CD8-positive, alpha-beta T cell (primary cell): ENCODE measurements at regions of chr3 and their contacts with region 1.

Region 1: GRCh38 chr3:128969993-128970739 is 23.7 kb downstream of the CFAP92 start:
- DNase-seq: peak; percentile 30 to 80 (median 68)
- ATAC-seq: peak; percentile 89
- H3K4me3 ChIP-seq: no peak overlapping the region
- H3K4me3 Mint-ChIP-seq: no peak overlapping the region
- H3K27ac ChIP-seq: no peak overlapping the region
- H3K27ac Mint-ChIP-seq: no peak overlapping the region
- H3K4me1 ChIP-seq: peaks cover 6% of the 10 kb centered on the region
- H3K4me1 Mint-ChIP-seq: peaks cover 7% of the 10 kb centered on the region
- H3K27me3 ChIP-seq: peaks cover 0 to 2% of the 10 kb centered on the region in 2 experiments
- H3K27me3 Mint-ChIP-seq: no peaks in the 10 kb centered on the region
- CTCF ChIP-seq: peak; percentile 96

Region 2: GRCh38 chr3:128456776-128457715 is 513.1 kb before region 1 on chr3:
- CTCF ChIA-PET with region 1: no interaction called
- POLR2A ChIA-PET with region 1: no interaction called
- intact Hi-C with region 1: no loop called
- DNase-seq: no peak
- ATAC-seq: no peak
- H3K4me3 ChIP-seq: no peak overlapping the region
- H3K4me3 Mint-ChIP-seq: no peak overlapping the region
- H3K27ac ChIP-seq: no peak overlapping the region
- H3K27ac Mint-ChIP-seq: no peak overlapping the region
- H3K4me1 ChIP-seq: no peaks in the 10 kb centered on the region
- H3K4me1 Mint-ChIP-seq: no peaks in the 10 kb centered on the region
- H3K27me3 ChIP-seq: peaks cover 0 to 6% of the 10 kb centered on the region in 2 experiments
- H3K27me3 Mint-ChIP-seq: peaks cover 18% of the 10 kb centered on the region
- CTCF ChIP-seq: no peak

Region 3: DNA sequence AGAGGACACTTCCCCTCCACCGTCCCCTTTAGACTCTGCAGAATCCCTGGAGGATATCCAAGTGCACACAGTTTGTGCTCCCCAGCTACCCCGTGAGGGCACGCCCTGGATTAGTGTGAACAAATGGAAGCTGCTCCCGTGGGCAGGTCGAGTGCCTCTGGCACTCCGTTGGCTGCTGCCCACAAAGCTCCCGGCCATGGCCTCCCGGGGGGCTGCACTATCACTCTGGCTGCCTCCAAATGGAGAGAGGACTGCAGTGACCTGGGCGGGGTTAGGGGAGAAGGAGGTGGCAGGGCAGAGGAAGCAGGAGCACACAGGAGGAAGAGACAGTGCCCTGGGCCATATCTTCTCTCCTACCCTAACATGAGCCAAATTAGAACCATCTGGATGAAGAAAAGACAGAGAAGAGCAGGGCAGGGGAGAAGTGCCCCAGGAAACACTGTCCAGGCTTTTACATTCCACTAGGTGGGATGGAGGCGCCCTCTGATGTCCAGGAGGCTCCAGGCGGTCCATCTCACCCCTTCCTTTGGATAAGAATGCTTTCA is 120.2 kb before region 1 on chr3:
- CTCF ChIA-PET with region 1: no interaction called
- POLR2A ChIA-PET with region 1: no interaction called
- intact Hi-C with region 1: no loop called
- DNase-seq: no peak
- ATAC-seq: no peak
- H3K4me3 ChIP-seq: no peak overlapping the region
- H3K4me3 Mint-ChIP-seq: no peak overlapping the region
- H3K27ac ChIP-seq: no peak overlapping the region
- H3K27ac Mint-ChIP-seq: no peak overlapping the region
- H3K4me1 ChIP-seq: peaks cover 19% of the 10 kb centered on the region
- H3K4me1 Mint-ChIP-seq: peaks cover 9% of the 10 kb centered on the region
- H3K27me3 ChIP-seq: no peaks in the 10 kb centered on the region
- H3K27me3 Mint-ChIP-seq: no peaks in the 10 kb centered on the region
- CTCF ChIP-seq: no peak

Region 4: DNA sequence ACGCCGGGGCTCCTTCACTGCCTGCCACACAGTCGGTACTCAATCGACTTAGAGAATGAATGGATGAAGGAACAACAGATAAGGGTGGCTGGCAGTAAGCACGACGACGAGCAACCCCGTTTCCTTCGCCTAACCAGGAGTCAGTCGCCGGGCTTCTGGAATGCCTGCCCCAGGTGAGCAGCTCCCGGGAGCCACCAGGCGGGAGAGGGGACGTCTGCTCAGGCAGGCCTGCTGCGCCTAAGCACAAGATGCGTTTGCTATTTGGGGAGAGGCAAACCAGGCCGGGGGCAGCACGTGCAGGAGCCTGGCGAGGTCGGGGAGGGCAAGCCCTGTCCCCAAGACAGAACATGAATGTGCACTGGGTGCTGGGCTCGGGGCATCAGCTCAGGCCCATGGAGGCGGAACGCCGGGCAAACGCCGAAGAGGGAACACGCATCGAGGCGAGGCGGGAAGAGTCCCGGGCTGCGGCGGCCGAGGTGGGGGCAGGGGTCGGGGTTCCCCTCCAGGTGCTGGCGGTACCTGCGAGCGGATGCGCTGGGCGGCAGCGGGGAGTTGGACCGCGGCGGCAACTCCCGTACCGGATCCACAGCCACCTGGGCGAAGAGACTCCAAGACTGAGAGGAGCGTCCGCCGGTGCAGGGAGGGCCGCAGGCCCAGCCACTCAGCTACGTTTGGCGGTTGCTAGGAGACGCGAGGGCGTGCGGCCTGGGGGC is 23.5 kb after region 1 on chr3 and contains the start of gene CFAP92:
- CTCF ChIA-PET with region 1: interaction called, 30 read pairs
- POLR2A ChIA-PET with region 1: interaction called, 3 read pairs
- intact Hi-C with region 1: no loop called
- DNase-seq: peak; percentile 84 to 94 (median 92)
- ATAC-seq: peak; percentile 97
- H3K4me3 ChIP-seq: peak within 1 kb of the TSS; percentile 39
- H3K4me3 Mint-ChIP-seq: peak within 1 kb of the TSS; percentile 81
- H3K27ac ChIP-seq: peak within 1 kb of the TSS in 1 of 2 experiments; percentile 22
- H3K27ac Mint-ChIP-seq: peak within 1 kb of the TSS; percentile 39
- H3K4me1 ChIP-seq: peaks cover 31% of the 10 kb centered on the region
- H3K4me1 Mint-ChIP-seq: peaks cover 30% of the 10 kb centered on the region
- H3K27me3 ChIP-seq: no peaks in the 10 kb centered on the region
- H3K27me3 Mint-ChIP-seq: no peaks in the 10 kb centered on the region
- CTCF ChIP-seq: no peak
- total RNA-seq, gene CFAP92: 0.60 to 0.75 TPM

Region 5: GRCh38 chr3:129026728-129027543 is 56.8 kb after region 1 on chr3:
- CTCF ChIA-PET with region 1: interaction called, 29 read pairs
- POLR2A ChIA-PET with region 1: interaction called, 3 read pairs
- intact Hi-C with region 1: loop called in 1 of 2 experiments (anchors 1 kb)
- DNase-seq: peak; percentile 85 to 98 (median 91)
- ATAC-seq: peak; percentile 98
- H3K4me3 ChIP-seq: peak overlapping the region; percentile 58 to 61
- H3K4me3 Mint-ChIP-seq: peak overlapping the region; percentile 85
- H3K27ac ChIP-seq: peak overlapping the region; percentile 75 to 80
- H3K27ac Mint-ChIP-seq: peak overlapping the region; percentile 99
- H3K4me1 ChIP-seq: peaks cover 22% of the 10 kb centered on the region
- H3K4me1 Mint-ChIP-seq: peaks cover 26% of the 10 kb centered on the region
- H3K27me3 ChIP-seq: no peaks in the 10 kb centered on the region
- H3K27me3 Mint-ChIP-seq: no peaks in the 10 kb centered on the region
- CTCF ChIP-seq: peak; percentile 84

Region 6: DNA sequence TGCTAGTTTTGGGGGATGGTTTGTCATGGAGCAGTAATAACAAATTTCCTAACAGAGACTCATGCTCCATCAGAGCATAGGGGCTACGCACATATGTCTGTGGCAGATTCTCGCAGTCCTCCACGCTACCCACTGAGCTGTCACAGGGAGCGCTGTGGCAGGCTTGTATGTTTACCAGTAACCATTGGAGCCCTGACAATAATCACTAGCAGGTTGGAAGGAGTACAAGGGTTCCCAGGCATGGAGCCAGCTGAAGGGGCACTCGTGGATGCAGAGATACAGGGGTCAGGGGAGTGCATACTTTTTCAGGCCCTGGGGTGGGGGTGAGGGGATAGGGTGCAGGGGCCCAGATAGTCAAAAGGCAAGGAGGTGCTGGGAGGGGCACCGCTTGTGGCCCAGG is 82.5 kb after region 1 on chr3:
- CTCF ChIA-PET with region 1: interaction called, 79 read pairs
- POLR2A ChIA-PET with region 1: no interaction called
- intact Hi-C with region 1: loop called in 1 of 2 experiments (anchors 1 kb)
- DNase-seq: no peak
- ATAC-seq: no peak
- H3K4me3 ChIP-seq: no peak overlapping the region
- H3K4me3 Mint-ChIP-seq: no peak overlapping the region
- H3K27ac ChIP-seq: no peak overlapping the region
- H3K27ac Mint-ChIP-seq: no peak overlapping the region
- H3K4me1 ChIP-seq: peaks cover 4% of the 10 kb centered on the region
- H3K4me1 Mint-ChIP-seq: peaks cover 10% of the 10 kb centered on the region
- H3K27me3 ChIP-seq: no peaks in the 10 kb centered on the region
- H3K27me3 Mint-ChIP-seq: no peaks in the 10 kb centered on the region
- CTCF ChIP-seq: no peak

Region 7: DNA sequence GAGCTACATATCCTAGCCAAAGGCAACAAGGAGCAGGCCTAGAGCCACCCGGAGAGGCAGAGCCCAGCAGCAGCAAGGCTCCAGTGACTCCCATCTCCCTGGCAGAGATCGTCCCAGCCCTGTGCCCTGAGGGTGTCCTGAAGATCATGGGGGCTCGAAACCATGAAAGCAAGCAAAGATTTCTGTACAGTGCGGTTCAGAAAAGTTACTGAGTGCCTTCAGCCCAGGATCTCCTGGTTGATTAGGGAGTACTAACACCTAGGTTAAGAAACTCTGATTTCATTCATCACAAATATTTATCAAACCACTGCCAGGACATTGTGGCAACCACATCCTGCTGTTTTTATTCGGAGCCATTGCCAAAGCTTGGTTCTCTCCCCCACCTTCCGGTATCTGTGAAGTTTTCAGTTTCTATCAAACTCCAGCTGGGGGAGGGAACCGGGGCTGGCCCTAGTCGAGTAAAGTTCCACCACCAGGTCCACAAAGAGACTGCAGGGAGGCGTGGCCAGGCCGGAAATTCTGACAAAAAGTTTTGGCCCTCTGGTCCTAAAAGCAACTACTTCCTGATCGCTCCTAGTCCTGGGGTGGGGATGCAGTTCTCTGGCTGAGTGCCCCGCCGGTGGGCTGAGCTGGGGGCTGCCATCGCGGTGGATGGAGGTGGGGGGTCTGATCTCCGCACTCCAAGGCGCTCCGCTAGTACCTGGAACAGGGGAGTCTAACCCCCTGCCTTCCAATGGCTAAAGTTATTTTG is 150.3 kb after region 1 on chr3:
- CTCF ChIA-PET with region 1: interaction called, 6 read pairs
- POLR2A ChIA-PET with region 1: interaction called, 9 read pairs
- intact Hi-C with region 1: loop called in 1 of 2 experiments (anchors 10 kb)
- DNase-seq: peak; percentile 79 to 97 (median 92)
- ATAC-seq: peak; percentile 51
- H3K4me3 ChIP-seq: peak overlapping the region; percentile 85 to 93
- H3K4me3 Mint-ChIP-seq: peak overlapping the region; percentile 94
- H3K27ac ChIP-seq: peak overlapping the region; percentile 74
- H3K27ac Mint-ChIP-seq: peak overlapping the region; percentile 99
- H3K4me1 ChIP-seq: peaks cover 33% of the 10 kb centered on the region
- H3K4me1 Mint-ChIP-seq: peaks cover 59% of the 10 kb centered on the region
- H3K27me3 ChIP-seq: no peaks in the 10 kb centered on the region
- H3K27me3 Mint-ChIP-seq: no peaks in the 10 kb centered on the region
- CTCF ChIP-seq: peak; percentile 26

Region 8: GRCh38 chr3:129249276-129250065 is 279.3 kb after region 1 on chr3 and contains the start of gene COPG1:
- CTCF ChIA-PET with region 1: interaction called, 203 read pairs
- POLR2A ChIA-PET with region 1: interaction called, 5 read pairs
- intact Hi-C with region 1: loop called (anchors 1 kb)
- DNase-seq: peak; percentile 72 to 95 (median 85)
- ATAC-seq: peak; percentile 83
- H3K4me3 ChIP-seq: peak within 1 kb of the TSS; percentile 80 to 87
- H3K4me3 Mint-ChIP-seq: peak within 1 kb of the TSS; percentile 96
- H3K27ac ChIP-seq: peak within 1 kb of the TSS; percentile 83 to 89
- H3K27ac Mint-ChIP-seq: peak within 1 kb of the TSS; percentile 96
- H3K4me1 ChIP-seq: peaks cover 31% of the 10 kb centered on the region
- H3K4me1 Mint-ChIP-seq: peaks cover 49% of the 10 kb centered on the region
- H3K27me3 ChIP-seq: no peaks in the 10 kb centered on the region
- H3K27me3 Mint-ChIP-seq: no peaks in the 10 kb centered on the region
- CTCF ChIP-seq: no peak
- total RNA-seq, gene COPG1: 77.0 to 93.5 TPM